Activated T-helper 2 cell treated with anti-CD3 and anti-CD28 coated beads, Interferon-gamma antibody, Interleukin-2, Interleukin-4, amounts not matched to agents 10 μg/mL and 5 μg/mL and 100 μg/mL, durations not matched to agents 14 hours and 24 hours and 36 hours (primary cell): ENCODE measurements at regions of chr3 and their contacts with region 1.

Region 1: DNA sequence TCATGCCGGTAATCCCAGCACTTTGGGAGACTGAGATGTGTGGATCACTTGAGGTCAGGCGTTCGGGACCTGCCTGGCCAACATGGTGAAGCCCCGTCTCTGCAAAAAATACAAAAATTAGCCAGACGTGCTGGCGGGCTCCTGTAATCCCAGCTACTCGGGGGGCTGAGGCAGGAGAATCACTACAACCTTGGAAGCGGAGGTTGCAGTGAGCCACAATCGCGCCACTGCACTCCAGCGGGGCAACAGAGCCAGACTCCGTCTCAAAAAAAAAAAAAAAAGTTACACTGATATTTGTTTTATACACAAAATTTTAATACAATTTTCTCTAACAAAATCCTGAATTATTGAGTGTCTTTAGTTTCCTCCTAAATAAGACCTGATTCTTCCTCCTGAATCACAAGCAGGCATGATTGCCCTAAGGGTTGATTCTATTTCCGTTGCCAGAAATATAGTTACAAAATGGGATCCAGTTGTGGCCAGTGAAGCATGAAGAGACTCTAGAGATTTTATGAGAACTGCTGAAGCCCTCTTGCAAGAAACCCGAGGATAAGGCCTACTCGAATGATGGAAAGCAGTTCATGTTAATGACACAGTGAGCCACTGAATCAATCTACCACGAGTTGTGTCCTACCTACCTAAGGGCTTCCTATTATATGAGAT is 9.6 kb upstream of the SMARCC1 start:
- DNase-seq: no peak
- H3K4me3 Mint-ChIP-seq: no peak overlapping the region
- H3K27ac Mint-ChIP-seq: no peak overlapping the region
- H3K4me1 Mint-ChIP-seq: peaks cover 2% of the 10 kb centered on the region
- H3K27me3 Mint-ChIP-seq: no peaks in the 10 kb centered on the region

Region 2: DNA sequence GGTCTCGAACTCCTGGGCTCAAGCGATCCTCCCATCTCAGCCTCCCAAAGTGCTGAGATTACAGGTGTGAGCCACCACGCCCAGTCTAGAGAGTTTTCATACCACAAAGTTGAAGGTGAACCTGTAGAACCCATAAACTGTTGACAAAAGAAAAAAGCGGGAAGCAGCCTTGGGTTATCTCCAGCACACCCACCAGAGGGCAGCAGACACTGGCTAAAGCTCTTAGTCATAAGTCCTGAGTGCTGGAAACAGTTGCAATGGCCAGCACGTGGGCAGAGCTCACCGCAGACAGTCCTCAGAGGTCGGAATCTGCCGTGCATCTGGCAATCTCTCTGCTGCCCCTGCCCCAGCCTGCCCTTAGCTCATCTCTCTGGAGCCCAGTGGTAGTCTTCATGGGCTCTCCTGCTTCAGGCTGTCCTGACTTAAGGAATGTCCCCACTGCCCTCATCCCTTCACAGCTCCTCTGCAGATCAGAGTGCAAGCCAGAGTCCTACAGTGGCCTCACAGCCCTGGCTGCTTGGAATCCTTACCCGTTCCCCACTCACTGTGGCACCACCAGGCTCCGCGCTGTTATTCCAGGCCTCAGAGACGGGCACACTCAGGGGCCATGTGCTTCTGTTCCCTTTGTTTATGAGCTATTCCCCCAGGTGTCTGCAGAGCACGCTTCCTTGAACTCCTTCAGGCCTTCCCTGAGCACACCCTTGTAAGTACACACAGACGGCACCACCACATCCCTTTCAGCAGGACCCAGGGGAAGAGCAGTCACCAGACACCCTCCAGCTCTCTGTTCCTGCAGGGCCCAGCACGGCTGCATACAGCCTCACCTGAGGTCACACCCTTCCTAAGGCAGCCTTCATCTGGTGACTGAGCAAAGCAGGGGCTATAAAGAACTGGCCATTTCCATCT is 269.0 kb before region 1 on chr3:
- intact Hi-C with region 1: loop called (anchors 1 kb)
- DNase-seq: peak; percentile 71
- H3K4me3 Mint-ChIP-seq: no peak overlapping the region
- H3K27ac Mint-ChIP-seq: no peak overlapping the region
- H3K4me1 Mint-ChIP-seq: peaks cover 9% of the 10 kb centered on the region
- H3K27me3 Mint-ChIP-seq: no peaks in the 10 kb centered on the region

Region 3: DNA sequence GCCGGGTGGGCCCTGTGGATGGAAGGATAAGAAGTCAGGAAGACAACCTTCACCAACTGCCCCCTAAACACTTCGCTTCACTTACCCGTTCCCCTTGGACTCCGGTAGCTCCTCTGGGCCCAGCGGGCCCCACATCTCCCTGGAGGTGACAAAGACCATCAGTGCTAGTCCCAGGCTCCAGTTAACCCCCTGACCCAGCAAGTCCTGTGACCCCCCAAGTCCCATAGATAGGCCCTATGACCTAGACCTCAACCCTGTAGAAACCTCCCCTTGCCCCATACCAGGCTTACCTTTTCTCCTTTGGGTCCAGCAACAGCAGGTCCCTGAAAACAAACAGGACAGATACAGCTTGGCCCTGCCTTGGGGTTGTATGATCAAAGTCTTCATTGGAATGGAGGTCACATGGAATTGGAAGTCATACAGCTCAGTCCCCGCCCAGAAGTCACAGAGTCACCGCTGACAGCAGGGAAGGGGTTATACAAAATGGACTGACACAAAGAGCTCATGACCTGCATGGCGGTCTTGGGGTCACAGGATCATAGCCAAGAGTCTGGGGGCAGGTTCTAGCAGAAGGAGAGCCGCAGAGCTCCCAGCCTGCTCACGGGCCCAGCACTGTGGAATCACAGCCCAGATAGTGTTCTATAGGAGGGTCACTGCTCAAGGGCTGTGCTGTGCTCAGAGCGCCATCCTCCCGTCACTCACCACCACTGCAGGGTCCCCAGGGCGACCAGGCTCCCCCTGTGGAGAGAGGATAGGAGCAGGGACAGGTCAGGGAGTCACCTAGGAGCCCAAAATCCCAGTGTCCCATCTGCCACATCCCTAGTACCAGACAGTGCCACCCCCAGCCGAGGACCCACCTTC is 790.5 kb after region 1 on chr3:
- intact Hi-C with region 1: no loop called
- DNase-seq: no peak
- H3K4me3 Mint-ChIP-seq: no peak overlapping the region
- H3K27ac Mint-ChIP-seq: no peak overlapping the region
- H3K4me1 Mint-ChIP-seq: no peaks in the 10 kb centered on the region
- H3K27me3 Mint-ChIP-seq: peaks cover 2% of the 10 kb centered on the region